ENCODE measurements at regions of chr12 and their contacts with region 1.

Region 1: DNA sequence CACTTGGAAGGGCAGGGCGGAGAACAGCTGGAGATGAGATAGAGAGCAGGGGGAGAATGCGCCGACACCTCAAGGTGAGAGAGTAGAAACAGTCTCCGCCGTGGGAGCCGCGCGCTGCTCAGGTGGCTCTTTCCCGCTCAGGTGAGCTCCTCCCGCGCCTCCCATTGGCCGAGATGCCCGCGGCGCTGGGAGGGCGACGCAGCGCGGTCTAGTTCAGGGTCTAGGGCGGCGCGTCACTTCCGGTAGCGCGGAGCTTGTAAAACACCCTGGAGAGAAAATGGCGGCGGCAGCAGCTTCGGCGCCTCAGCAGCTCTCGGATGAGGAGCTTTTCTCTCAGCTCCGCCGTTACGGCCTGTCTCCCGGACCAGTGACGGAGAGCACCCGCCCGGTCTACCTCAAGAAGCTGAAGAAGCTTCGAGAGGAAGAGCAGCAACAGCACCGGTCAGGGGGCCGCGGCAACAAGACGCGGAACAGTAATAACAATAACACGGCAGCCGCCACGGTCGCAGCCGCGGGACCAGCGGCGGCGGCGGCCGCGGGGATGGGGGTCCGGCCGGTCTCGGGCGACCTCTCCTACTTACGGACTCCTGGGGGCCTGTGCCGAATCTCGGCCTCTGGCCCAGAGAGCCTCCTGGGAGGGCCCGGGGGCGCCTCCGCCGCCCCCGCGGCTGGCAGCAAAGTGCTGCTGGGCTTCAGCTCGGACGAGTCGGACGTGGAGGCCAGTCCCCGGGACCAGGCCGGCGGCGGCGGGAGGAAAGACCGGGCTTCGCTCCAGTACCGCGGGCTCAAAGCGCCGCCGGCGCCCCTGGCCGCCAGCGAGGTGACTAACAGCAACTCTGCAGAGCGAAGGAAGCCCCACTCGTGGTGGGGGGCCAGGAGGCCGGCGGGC is at the start of gene LEMD3:
- DNase-seq: peak; percentile 97
- ATAC-seq: peak; percentile 88
- H3K4me3 ChIP-seq: peak within 1 kb of the TSS; percentile 79
- H3K27ac ChIP-seq: peak within 1 kb of the TSS; percentile 47
- H3K4me1 ChIP-seq: peaks cover 28% of the 10 kb centered on the region
- H3K27me3 ChIP-seq: no peaks in the 10 kb centered on the region
- CTCF ChIP-seq: no peak
- total RNA-seq, gene LEMD3: 57.8 and 71.5 TPM in 2 replicates

Region 2: DNA sequence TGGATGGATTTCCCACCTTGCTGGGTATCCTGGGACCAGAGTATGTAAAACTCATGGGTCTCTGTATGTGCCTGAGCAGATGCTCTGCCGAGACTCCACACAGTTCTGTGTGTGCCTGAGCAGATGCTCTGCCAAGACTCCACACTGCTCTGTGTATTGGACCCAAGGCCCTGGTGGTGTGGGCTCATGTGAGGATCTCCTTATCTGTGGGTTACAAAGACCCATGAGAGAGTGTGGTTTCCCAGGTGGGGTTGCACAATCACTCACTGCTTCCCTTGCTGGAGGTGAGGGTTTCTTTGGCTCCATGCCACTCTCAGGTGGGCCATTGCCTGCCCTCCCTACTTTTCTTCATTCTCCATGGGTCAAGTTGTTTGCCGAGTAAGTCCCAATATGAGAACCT is 203.6 kb before region 1 on chr12:
- CTCF ChIA-PET with region 1: no interaction called
- POLR2A ChIA-PET with region 1: no interaction called
- intact Hi-C with region 1: no loop called
- DNase-seq: no peak
- ATAC-seq: no peak
- H3K4me3 ChIP-seq: no peak overlapping the region
- H3K27ac ChIP-seq: no peak overlapping the region
- H3K4me1 ChIP-seq: peaks cover 13% of the 10 kb centered on the region
- H3K27me3 ChIP-seq: no peaks in the 10 kb centered on the region
- CTCF ChIP-seq: no peak

Region 3: DNA sequence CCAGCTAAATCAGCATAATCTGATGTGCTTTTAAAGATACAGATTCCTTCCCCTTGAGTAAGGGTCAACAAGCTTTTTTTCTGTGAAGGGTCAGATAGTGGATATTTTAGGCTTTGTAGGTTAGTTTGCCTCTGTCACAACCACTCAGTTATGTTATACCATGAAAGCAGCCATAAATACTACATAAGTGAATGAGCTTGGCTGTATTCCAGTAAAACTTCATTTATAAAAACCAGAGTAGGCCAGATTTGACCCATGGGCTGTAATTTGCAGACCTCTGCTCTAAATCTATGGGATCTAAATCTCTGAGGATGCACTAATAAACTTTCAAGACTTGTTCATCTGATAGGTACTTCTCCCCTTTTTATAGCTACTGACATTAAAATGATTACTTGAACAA is 47.5 kb after region 1 on chr12:
- CTCF ChIA-PET with region 1: no interaction called
- POLR2A ChIA-PET with region 1: interaction called, 19 read pairs
- intact Hi-C with region 1: no loop called
- DNase-seq: no peak
- ATAC-seq: no peak
- H3K4me3 ChIP-seq: no peak overlapping the region
- H3K27ac ChIP-seq: no peak overlapping the region
- H3K4me1 ChIP-seq: no peaks in the 10 kb centered on the region
- H3K27me3 ChIP-seq: no peaks in the 10 kb centered on the region
- CTCF ChIP-seq: no peak

Region 4: GRCh38 chr12:65232476-65233077 is 63.0 kb after region 1 on chr12:
- CTCF ChIA-PET with region 1: interaction called, 6 read pairs
- POLR2A ChIA-PET with region 1: interaction called, 4 read pairs
- intact Hi-C with region 1: loop called (anchors 5 kb)
- DNase-seq: peak; percentile 45
- ATAC-seq: no peak
- H3K4me3 ChIP-seq: no peak overlapping the region
- H3K27ac ChIP-seq: no peak overlapping the region
- H3K4me1 ChIP-seq: peaks cover 11% of the 10 kb centered on the region
- H3K27me3 ChIP-seq: no peaks in the 10 kb centered on the region
- CTCF ChIP-seq: peak; percentile 58

Region 5: GRCh38 chr12:65799331-65799730 is 629.8 kb after region 1 on chr12:
- CTCF ChIA-PET with region 1: no interaction called
- POLR2A ChIA-PET with region 1: interaction called, 29 read pairs
- intact Hi-C with region 1: no loop called
- DNase-seq: no peak
- ATAC-seq: no peak
- H3K4me3 ChIP-seq: no peak overlapping the region
- H3K27ac ChIP-seq: no peak overlapping the region
- H3K4me1 ChIP-seq: no peaks in the 10 kb centered on the region
- H3K27me3 ChIP-seq: no peaks in the 10 kb centered on the region
- CTCF ChIP-seq: no peak